Panc1 (cell line): ENCODE measurements at regions of chr20 and their contacts with region 1.

Region 1: GRCh38 chr20:37534401-37535157 is 6.9 kb upstream of the BLCAP start:
- DNase-seq: peak; percentile 86
- ATAC-seq: peak; percentile 94
- H3K4me3 ChIP-seq: no peak overlapping the region
- H3K27ac ChIP-seq: no peak overlapping the region
- H3K4me1 ChIP-seq: no peaks in the 10 kb centered on the region; the same call in 1 of the 2 replicates
- H3K27me3 ChIP-seq: no peaks in the 10 kb centered on the region
- CTCF ChIP-seq: peak; percentile 86

Region 2: GRCh38 chr20:37198932-37199660 is 335.5 kb before region 1 on chr20:
- CTCF ChIA-PET with region 1: no interaction called
- POLR2A ChIA-PET with region 1: no interaction called
- in situ Hi-C with region 1: no loop called
- intact Hi-C with region 1: loop called (anchors 2 kb)
- DNase-seq: no peak
- ATAC-seq: no peak
- H3K4me3 ChIP-seq: no peak overlapping the region
- H3K27ac ChIP-seq: no peak overlapping the region
- H3K4me1 ChIP-seq: peaks cover 6% of the 10 kb centered on the region
- H3K27me3 ChIP-seq: no peaks in the 10 kb centered on the region
- CTCF ChIP-seq: no peak

Region 3: GRCh38 chr20:37265152-37265551 is 269.4 kb before region 1 on chr20:
- CTCF ChIA-PET with region 1: interaction called, 3 read pairs
- POLR2A ChIA-PET with region 1: no interaction called
- in situ Hi-C with region 1: no loop called
- intact Hi-C with region 1: loop called (anchors 5 kb)
- DNase-seq: no peak
- ATAC-seq: no peak
- H3K4me3 ChIP-seq: no peak overlapping the region
- H3K27ac ChIP-seq: no peak overlapping the region
- H3K4me1 ChIP-seq: no peaks in the 10 kb centered on the region
- H3K27me3 ChIP-seq: peaks cover 4% of the 10 kb centered on the region
- CTCF ChIP-seq: no peak

Region 4: GRCh38 chr20:37282556-37282955 is 252.0 kb before region 1 on chr20:
- CTCF ChIA-PET with region 1: no interaction called
- POLR2A ChIA-PET with region 1: interaction called, 3 read pairs
- in situ Hi-C with region 1: no loop called
- intact Hi-C with region 1: loop called (anchors 5 kb)
- DNase-seq: no peak
- ATAC-seq: no peak
- H3K4me3 ChIP-seq: no peak overlapping the region
- H3K27ac ChIP-seq: no peak overlapping the region
- H3K4me1 ChIP-seq: no peaks in the 10 kb centered on the region
- H3K27me3 ChIP-seq: no peaks in the 10 kb centered on the region
- CTCF ChIP-seq: no peak; the same call in 1 of the 2 replicates

Region 5: DNA sequence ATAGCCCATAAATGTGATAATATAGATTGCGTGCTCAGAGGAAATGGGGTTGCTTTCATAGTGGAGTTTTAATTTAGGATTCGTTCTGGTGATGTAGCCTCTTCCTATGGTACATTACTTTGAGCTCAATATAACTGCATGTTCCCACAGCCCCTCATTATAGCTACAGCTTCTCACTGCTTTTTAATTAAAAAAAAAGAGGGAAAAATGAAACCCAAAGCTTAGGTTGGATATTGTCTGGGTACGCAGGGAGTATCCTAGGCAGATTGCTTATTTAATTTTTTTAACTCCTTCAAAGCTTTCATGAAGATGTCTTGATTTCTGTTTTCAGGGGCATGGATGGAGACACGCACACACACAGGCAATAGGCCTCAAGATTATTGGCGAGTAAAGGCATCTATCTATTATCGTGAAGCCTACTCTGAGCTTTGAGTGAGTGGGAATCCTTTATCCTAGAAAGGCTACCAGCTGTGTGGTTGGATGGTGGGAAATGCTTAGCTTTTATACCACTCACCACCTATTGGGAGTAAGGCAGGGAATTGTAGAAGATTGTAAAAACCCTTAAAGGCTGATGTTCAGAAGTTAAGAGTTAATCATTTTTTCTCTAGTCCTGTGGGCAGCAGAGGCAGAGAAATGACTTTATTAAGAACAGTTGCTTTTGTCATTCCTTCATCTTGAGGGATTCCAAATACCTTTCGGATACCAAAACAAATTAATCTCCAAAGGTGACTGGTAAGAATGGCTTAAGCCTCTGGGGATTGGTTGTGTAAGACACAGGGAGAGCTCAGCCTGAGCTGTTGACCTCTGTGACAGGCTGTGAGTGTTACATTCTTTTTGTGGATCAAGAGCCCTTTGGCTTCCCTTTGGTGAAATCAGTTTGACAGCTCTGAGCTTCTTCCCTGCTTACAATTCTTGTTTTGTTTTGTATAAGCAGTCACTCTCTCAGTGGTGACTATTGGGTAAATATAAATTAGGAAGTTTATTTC is 192.7 kb after region 1 on chr20:
- CTCF ChIA-PET with region 1: no interaction called
- POLR2A ChIA-PET with region 1: no interaction called
- in situ Hi-C with region 1: no loop called
- intact Hi-C with region 1: no loop called
- DNase-seq: no peak
- ATAC-seq: no peak
- H3K4me3 ChIP-seq: no peak overlapping the region
- H3K27ac ChIP-seq: no peak overlapping the region
- H3K4me1 ChIP-seq: 0 out of 2 replicates have a peak, but pooled peaks cover 5% of the 10 kb centered on the region
- H3K27me3 ChIP-seq: no peaks in the 10 kb centered on the region
- CTCF ChIP-seq: no peak

Region 6: GRCh38 chr20:37821696-37822095 is 287.1 kb after region 1 on chr20:
- CTCF ChIA-PET with region 1: no interaction called
- POLR2A ChIA-PET with region 1: no interaction called
- in situ Hi-C with region 1: no loop called
- intact Hi-C with region 1: no loop called
- DNase-seq: no peak
- ATAC-seq: no peak
- H3K4me3 ChIP-seq: no peak overlapping the region
- H3K27ac ChIP-seq: no peak overlapping the region
- H3K4me1 ChIP-seq: no peaks in the 10 kb centered on the region
- H3K27me3 ChIP-seq: no peaks in the 10 kb centered on the region
- CTCF ChIP-seq: no peak